ENCODE measurements at regions of chr4 and their contacts with region 1.

Region 1: GRCh38 chr4:53908661-53909078 is 155.7 kb downstream of the CHIC2 start:
- DNase-seq: peak; percentile 62
- ATAC-seq: peak; percentile 93
- H3K4me3 ChIP-seq: peak overlapping the region; percentile 6 to 13; a peak in 2 of 4 replicates
- H3K27ac ChIP-seq: no peak overlapping the region
- H3K4me1 ChIP-seq: peaks cover 2 to 7% of the 10 kb centered on the region in 2 experiments; a peak in 3 of 4 replicates
- H3K27me3 ChIP-seq: peaks cover 11% of the 10 kb centered on the region; the same call in 1 of the 2 replicates
- CTCF ChIP-seq: peak; percentile 73 to 84 (median 83)
- POLR2A ChIP-seq: no peak
- RAD21 ChIP-seq: peak; percentile 87

Region 2: DNA sequence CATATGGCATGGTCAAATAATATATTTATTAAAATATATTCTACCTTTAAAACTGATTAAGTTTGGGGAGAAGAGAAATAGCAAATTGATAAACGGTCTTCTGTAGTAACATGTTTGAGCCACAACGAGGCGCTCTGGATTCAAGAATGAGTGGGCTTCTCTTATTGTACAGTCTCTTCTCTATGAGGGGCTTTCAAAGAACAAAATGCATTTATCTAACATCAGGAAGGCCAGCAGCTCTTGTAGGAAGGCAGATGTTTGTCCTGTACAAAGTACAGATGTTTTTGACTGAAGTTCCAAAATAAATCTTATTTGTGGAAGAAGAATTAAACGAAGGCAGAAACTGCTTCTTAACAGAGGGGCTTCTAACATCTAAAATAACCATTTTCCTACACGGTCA is 893.0 kb before region 1 on chr4:
- CTCF ChIA-PET with region 1: no interaction called
- POLR2A ChIA-PET with region 1: no interaction called
- RAD21 ChIA-PET with region 1: no interaction called
- intact Hi-C with region 1: loop called (anchors 5 kb)
- DNase-seq: peak; percentile 26
- ATAC-seq: peak; percentile 52; the same call in 1 of the 2 replicates
- H3K4me3 ChIP-seq: no peak overlapping the region
- H3K27ac ChIP-seq: no peak overlapping the region
- H3K4me1 ChIP-seq: peaks cover 3 to 8% of the 10 kb centered on the region in 2 experiments; a peak in 2 of 4 replicates
- H3K27me3 ChIP-seq: no peaks in the 10 kb centered on the region
- CTCF ChIP-seq: peak; percentile 57 to 73 (median 60); a peak in 5 of 6 replicates
- POLR2A ChIP-seq: no peak
- RAD21 ChIP-seq: peak; percentile 73

Region 3: DNA sequence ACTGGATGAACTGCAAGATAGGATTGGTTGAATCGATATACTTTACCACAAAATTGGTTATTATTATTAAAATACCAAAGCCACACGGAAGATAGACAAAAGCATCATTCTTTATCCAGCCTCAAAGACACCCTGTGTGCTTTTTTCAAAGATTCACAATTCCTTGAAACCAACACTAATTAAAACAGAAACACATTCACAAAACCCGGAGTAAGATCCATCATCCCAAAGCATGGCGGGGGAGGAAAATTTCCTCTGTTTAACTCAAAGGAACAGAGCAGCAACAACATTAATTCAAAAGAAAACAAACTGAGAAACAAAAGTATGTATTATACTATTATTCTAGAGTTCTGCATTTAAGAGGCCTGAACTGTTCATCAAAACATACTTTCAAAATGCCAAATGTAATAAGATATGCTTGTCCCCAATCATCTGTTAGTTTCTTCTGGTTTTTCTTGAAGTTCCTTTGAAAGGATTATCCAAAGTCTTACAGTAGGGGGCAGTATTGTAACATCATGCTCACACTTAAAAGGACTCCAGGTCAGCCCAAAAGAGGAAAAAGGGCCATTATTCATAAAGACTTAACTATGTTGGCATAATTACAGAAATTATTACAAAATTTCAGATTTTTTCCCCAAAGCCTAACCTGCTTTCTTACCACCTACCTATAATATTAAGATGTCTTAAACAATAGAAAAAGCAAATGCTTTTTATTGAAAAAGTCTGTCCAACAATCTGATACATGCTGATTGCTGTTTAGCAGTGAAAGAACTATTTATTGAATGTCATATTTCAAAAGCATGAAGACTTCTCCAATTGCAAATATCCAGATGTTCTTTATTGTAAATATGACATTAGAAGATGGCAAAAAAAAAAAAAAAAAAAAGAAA is 711.5 kb before region 1 on chr4:
- CTCF ChIA-PET with region 1: no interaction called
- POLR2A ChIA-PET with region 1: no interaction called
- RAD21 ChIA-PET with region 1: no interaction called
- intact Hi-C with region 1: loop called (anchors 5 kb)
- DNase-seq: peak; percentile 70
- ATAC-seq: peak; percentile 76
- H3K4me3 ChIP-seq: no peak overlapping the region
- H3K27ac ChIP-seq: no peak overlapping the region
- H3K4me1 ChIP-seq: no peaks in the 10 kb centered on the region
- H3K27me3 ChIP-seq: no peaks in the 10 kb centered on the region
- CTCF ChIP-seq: peak; percentile 61 to 81 (median 65); a peak in 5 of 6 replicates
- POLR2A ChIP-seq: no peak
- RAD21 ChIP-seq: peak; percentile 81

Region 4: GRCh38 chr4:53929955-53930798 is 21.5 kb after region 1 on chr4:
- CTCF ChIA-PET with region 1: interaction called, 13 read pairs
- POLR2A ChIA-PET with region 1: no interaction called
- RAD21 ChIA-PET with region 1: no interaction called
- intact Hi-C with region 1: no loop called
- DNase-seq: peak; percentile 68
- ATAC-seq: peak; percentile 99
- H3K4me3 ChIP-seq: no peak overlapping the region
- H3K27ac ChIP-seq: no peak overlapping the region
- H3K4me1 ChIP-seq: peaks cover 0 to 6% of the 10 kb centered on the region in 2 experiments; a peak in 1 of 4 replicates
- H3K27me3 ChIP-seq: no peaks in the 10 kb centered on the region
- CTCF ChIP-seq: peak; percentile 75 to 87 (median 77); a peak in 5 of 6 replicates
- POLR2A ChIP-seq: no peak
- RAD21 ChIP-seq: peak; percentile 91

Region 5: DNA sequence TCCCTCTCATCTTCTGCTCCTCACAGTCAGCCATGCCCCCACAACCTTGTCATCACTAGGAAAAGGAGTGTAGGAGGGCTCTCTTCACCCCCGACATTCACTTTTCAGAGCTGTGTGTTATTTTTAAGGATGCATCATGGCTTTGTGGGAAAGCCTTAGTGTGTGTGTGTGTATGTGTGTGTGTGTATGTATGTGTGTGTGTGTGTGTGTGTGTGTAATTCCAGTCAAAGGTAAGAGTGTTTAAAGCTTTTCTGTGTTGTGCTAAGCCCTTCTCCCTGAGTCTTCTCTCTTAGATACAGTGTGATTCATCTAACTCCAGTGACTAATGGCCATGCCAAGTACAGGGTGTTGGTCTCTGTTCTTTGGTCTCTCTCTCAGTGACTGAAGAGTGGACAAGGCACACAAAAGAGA is 79.1 kb after region 1 on chr4:
- CTCF ChIA-PET with region 1: no interaction called
- POLR2A ChIA-PET with region 1: no interaction called
- RAD21 ChIA-PET with region 1: no interaction called
- intact Hi-C with region 1: no loop called
- DNase-seq: peak; percentile 26
- ATAC-seq: 0 out of 2 replicates have a peak, but pooled peaks have one; percentile 42
- H3K4me3 ChIP-seq: no peak overlapping the region
- H3K27ac ChIP-seq: no peak overlapping the region
- H3K4me1 ChIP-seq: peaks cover 0 to 8% of the 10 kb centered on the region in 2 experiments; a peak in 1 of 4 replicates
- H3K27me3 ChIP-seq: no peaks in the 10 kb centered on the region
- CTCF ChIP-seq: no peak
- POLR2A ChIP-seq: no peak
- RAD21 ChIP-seq: no peak

Region 6: DNA sequence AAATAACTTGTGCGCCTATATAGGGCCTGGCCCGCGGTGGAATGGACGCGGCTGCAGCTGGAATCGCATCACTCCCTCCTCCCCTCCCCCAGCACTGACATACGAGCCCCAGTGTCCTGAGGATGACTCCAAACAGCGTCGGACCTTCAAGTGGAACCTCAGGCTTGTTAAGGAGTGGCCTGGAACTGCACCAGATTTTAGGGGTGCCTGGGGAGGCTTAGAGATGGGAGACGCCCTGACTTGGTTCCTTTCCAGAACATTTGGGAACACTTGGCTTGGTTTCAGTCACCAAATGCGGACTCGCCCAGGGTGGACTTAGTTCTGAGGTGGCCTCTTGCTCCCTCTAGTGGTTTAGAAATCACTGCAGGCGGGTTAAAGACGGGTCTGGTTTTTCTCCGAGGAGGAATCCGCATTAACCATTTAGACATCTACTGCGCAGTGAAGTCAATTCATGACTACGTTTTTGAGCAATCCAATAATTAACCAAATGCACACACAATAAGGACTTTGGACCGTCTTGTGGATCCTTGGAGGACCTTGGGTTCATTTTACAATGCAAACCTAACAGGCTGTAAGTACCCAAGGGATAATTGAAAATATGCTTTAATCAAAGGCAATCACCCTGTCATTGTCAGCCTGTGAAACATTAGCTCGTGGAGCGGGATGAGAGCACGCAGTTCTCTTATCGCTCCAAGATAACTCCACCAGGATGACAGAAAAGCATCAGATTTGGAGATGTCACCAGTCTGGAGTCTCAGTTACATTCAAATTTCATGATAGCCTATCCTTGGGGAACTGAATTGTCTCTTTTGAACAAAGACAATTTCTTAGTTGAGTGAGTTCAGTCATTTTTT is 309.2 kb after region 1 on chr4:
- CTCF ChIA-PET with region 1: interaction called, 33 read pairs
- POLR2A ChIA-PET with region 1: no interaction called
- RAD21 ChIA-PET with region 1: interaction called in 1 of 2 experiments, 4 read pairs
- intact Hi-C with region 1: loop called (anchors 1 kb)
- DNase-seq: peak; percentile 71
- ATAC-seq: peak; percentile 97
- H3K4me3 ChIP-seq: peak overlapping the region; percentile 50 to 54
- H3K27ac ChIP-seq: no peak overlapping the region; the same call in 1 of the 2 replicates
- H3K4me1 ChIP-seq: peaks cover 0 to 12% of the 10 kb centered on the region in 2 experiments; a peak in 2 of 4 replicates
- H3K27me3 ChIP-seq: no peaks in the 10 kb centered on the region
- CTCF ChIP-seq: peak; percentile 85 to 91 (median 88)
- POLR2A ChIP-seq: no peak
- RAD21 ChIP-seq: peak; percentile 96

Region 7: DNA sequence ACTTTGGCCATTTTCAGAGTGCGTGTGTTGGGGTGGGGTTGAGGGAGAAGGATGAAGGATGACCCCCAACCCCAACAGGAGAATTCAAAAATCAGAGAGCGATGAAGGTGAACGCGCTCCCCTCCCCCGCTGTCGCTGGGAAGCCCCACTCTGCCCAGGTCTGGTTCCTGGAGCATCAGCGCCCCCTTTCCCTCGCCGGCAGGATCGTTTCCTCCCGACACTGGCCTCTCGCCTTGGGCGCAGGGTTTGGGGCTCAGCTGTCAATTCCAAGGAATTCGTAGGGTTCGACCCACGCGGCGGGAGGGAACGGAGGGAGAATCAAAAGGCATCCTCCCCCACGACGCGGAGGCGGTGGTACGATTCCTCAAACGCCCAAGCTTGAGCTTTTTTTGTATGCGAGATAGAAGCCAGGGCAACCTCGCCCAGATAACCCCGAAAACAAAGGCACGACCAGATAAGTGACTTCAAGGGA is 319.4 kb after region 1 on chr4:
- CTCF ChIA-PET with region 1: interaction called, 34 read pairs
- POLR2A ChIA-PET with region 1: no interaction called
- RAD21 ChIA-PET with region 1: interaction called in 1 of 2 experiments, 3 read pairs
- intact Hi-C with region 1: loop called (anchors 1 kb)
- DNase-seq: no peak
- ATAC-seq: peak; percentile 94
- H3K4me3 ChIP-seq: peak overlapping the region; percentile 9 to 51
- H3K27ac ChIP-seq: no peak overlapping the region
- H3K4me1 ChIP-seq: peaks cover 0 to 13% of the 10 kb centered on the region in 2 experiments; a peak in 2 of 4 replicates
- H3K27me3 ChIP-seq: no peaks in the 10 kb centered on the region
- CTCF ChIP-seq: peak; percentile 77 to 83 (median 82)
- POLR2A ChIP-seq: no peak
- RAD21 ChIP-seq: peak; percentile 92